GM12878 (cell line): ENCODE measurements at regions of chr1 and their contacts with region 1.

Region 1: DNA sequence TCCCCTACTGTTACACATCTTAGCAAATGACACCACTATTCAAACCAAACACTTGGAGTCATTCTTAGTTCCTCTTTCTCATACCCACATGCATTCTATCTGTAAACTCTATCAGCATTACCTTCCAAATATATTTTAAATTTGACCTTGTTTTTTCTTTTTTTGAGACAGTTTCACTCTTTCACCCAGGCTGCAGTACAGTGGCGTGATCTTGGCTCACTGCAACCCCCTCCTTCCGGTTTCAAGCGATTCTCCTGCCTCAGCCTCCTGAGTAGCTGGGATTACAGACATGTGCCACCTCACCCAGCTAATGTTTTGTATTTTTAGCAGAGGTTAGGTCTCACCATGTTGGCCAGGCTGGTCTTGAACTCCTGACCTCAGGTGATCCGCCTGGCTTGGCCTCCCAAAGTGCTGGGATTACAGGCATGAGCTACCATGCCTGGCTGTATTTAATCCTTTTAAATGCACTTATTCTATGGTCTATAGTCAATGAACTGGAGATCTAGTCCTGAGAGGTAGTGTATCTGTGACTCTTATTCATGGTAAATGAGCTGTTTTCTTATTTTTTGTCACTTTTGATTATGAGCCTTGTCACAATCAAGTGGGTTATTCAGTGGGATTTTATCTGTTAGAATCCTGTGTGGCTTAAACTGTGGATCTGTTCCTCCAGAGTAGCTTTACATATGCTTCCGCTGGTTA is 73.1 kb downstream of the GATAD2B start:
- DNase-seq: peak; percentile 78
- ATAC-seq: peak; percentile 92
- H3K4me3 ChIP-seq: 0 out of 2 replicates have a peak overlapping the region, but pooled peaks have one; percentile 4
- H3K27ac ChIP-seq: peak overlapping the region; percentile 70
- H3K4me1 ChIP-seq: peaks cover 46% of the 10 kb centered on the region
- H3K27me3 ChIP-seq: no peaks in the 10 kb centered on the region
- CTCF ChIP-seq: no peak
- EP300 ChIP-seq: peak in 1 of 2 experiments; percentile 20; a peak in 1 of 4 replicates
- POLR2A ChIP-seq: no peak
- RAD21 ChIP-seq: no peak

Region 2: GRCh38 chr1:153866045-153866850 is 16.6 kb after region 1 on chr1:
- CTCF ChIA-PET with region 1: interaction called, 3 read pairs
- POLR2A ChIA-PET with region 1: interaction called, 3 read pairs
- RAD21 ChIA-PET with region 1: interaction called, 4 read pairs
- SMC1A ChIA-PET with region 1: interaction called, 10 read pairs
- in situ Hi-C with region 1: no loop called
- intact Hi-C with region 1: no loop called
- DNase-seq: no peak
- ATAC-seq: peak; percentile 85
- H3K4me3 ChIP-seq: peak overlapping the region; percentile 39; the same call in 1 of the 2 replicates
- H3K27ac ChIP-seq: peak overlapping the region; percentile 35
- H3K4me1 ChIP-seq: peaks cover 17% of the 10 kb centered on the region
- H3K27me3 ChIP-seq: no peaks in the 10 kb centered on the region
- CTCF ChIP-seq: no peak
- EP300 ChIP-seq: no peak
- POLR2A ChIP-seq: no peak
- RAD21 ChIP-seq: no peak

Region 3: GRCh38 chr1:153903841-153904455 is 54.3 kb after region 1 on chr1:
- CTCF ChIA-PET with region 1: no interaction called
- POLR2A ChIA-PET with region 1: interaction called, 10 read pairs
- RAD21 ChIA-PET with region 1: no interaction called
- SMC1A ChIA-PET with region 1: no interaction called
- in situ Hi-C with region 1: no loop called
- intact Hi-C with region 1: no loop called
- DNase-seq: no peak
- ATAC-seq: no peak
- H3K4me3 ChIP-seq: no peak overlapping the region
- H3K27ac ChIP-seq: no peak overlapping the region
- H3K4me1 ChIP-seq: peaks cover 5% of the 10 kb centered on the region; the same call in 1 of the 2 replicates
- H3K27me3 ChIP-seq: no peaks in the 10 kb centered on the region
- CTCF ChIP-seq: no peak
- EP300 ChIP-seq: no peak
- POLR2A ChIP-seq: no peak
- RAD21 ChIP-seq: no peak